ENCODE measurements at regions of chr12 and their contacts with region 1.

Region 1: GRCh38 chr12:57069523-57069922 is 9.1 kb downstream of the NEMP1 start:
- DNase-seq: peak; percentile 79
- H3K4me3 Mint-ChIP-seq: no peak overlapping the region
- H3K27ac Mint-ChIP-seq: peak overlapping the region; percentile 86
- H3K4me1 Mint-ChIP-seq: peaks cover 51% of the 10 kb centered on the region
- H3K27me3 Mint-ChIP-seq: no peaks in the 10 kb centered on the region

Region 2: DNA sequence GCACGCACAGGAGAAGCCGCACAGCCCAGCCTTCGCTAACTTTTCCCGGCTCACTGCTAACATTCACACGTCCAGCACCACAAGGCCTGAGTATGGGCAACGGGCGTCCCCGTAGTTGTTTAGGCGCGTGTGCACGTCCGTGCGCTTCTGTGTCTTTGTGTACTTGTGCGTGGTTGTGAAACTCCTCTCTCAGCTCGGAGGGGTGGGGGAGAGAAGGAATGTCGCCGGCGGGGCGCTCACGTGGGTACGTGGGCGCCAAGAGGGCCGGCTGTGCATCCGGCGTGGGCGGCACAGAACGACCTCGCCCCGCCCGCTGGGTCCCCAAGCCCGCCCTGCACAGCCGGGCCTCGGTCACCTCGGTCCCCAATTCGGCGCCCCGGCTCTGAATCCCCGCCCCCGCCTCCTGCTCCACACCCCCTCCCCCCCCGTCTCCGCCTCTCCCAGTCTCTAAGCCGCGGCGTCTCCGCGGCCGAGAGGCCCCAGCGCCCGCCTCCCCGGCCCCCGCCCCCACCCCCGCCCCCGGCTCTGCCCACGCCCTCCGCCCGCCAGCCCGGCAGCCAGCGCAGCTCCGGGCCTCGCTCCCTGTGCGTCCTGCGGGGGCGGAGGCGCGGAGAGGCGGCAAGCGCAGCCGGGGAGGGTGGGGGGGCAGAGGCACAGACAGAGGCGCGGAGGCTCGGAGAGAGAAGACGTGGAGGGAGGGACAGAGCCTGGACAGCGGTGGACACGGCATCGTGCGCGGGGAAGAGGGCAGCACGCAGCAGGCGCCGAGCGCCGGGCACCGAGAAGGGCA is 19.1 kb after region 1 on chr12 and contains the start of gene NAB2:
- CTCF ChIA-PET with region 1: interaction called, 13 read pairs
- POLR2A ChIA-PET with region 1: interaction called, 6 read pairs
- DNase-seq: peak; percentile 96
- H3K4me3 Mint-ChIP-seq: peak within 1 kb of the TSS; percentile 83
- H3K27ac Mint-ChIP-seq: peak within 1 kb of the TSS; percentile 94
- H3K4me1 Mint-ChIP-seq: peaks cover 64% of the 10 kb centered on the region
- H3K27me3 Mint-ChIP-seq: no peaks in the 10 kb centered on the region
- total RNA-seq, gene NAB2: 5.5 to 6.8 TPM

Region 3: GRCh38 chr12:57208631-57209282 is 139.2 kb after region 1 on chr12:
- CTCF ChIA-PET with region 1: no interaction called
- POLR2A ChIA-PET with region 1: no interaction called
- DNase-seq: no peak
- H3K4me3 Mint-ChIP-seq: no peak overlapping the region
- H3K27ac Mint-ChIP-seq: no peak overlapping the region
- H3K4me1 Mint-ChIP-seq: peaks cover 7% of the 10 kb centered on the region
- H3K27me3 Mint-ChIP-seq: peaks cover 5% of the 10 kb centered on the region

Measured in activated CD4-positive, alpha-beta T cell treated with anti-CD3 and anti-CD28 coated beads, Interleukin-2, amount 10 ng/mL, durations not matched to agents 7 days and 5 days (primary cell).